B cell (primary cell): ENCODE measurements at regions of chr22 and their contacts with region 1.

Region 1: DNA sequence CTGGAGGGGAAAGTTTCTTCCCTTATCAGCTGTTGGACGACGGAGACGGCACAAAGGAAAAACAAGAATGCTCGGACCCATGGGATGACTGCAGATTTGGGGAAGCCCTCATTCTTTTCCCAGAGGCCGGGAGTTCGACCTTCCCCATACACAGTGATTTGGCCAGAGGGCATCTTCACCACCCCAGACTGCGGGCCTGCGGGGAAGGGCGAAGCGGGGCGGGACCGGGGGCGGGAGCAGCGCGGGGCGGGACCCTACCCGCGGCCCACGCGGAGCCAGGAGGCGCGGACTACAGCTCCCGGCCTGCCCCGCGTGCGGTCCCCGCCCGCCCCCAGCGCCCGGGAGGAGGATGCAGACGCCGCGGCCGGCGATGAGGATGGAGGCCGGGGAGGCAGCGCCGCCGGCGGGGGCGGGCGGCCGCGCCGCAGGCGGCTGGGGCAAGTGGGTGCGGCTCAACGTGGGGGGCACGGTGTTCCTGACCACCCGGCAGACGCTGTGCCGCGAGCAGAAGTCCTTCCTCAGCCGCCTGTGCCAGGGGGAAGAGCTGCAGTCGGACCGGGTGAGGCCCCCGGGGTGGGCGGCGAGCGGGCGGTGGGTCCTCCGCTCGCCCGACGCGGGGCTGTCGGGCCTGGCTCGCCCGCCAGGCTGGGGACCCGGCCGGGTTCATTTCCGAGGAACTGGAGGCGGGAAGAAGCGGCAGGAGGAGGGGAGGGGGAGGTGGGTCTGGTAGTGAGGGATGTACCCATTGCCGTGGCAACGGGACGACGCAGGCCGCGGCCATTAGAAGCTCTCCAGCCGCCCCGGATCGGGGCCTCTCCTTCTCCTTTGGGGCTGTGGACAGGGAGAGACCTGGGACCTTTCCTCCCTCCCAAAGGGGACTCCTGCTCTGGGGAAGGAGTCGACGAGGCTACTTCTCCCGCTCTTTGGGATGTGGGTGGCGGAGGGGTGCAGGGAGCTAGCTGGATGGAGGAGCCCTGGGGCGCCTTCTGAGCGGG is at the start of gene KCTD17:
- DNase-seq: peak; percentile 78
- ATAC-seq: peak; percentile 100
- H3K4me3 ChIP-seq: peak within 1 kb of the TSS in 4 of 5 experiments; percentile 40 to 71 (median 60)
- H3K4me3 Mint-ChIP-seq: peak within 1 kb of the TSS; percentile 85
- H3K27ac ChIP-seq: peak within 1 kb of the TSS in 1 of 2 donors; percentile 36
- H3K27ac Mint-ChIP-seq: peak within 1 kb of the TSS; percentile 39
- H3K4me1 ChIP-seq: peaks cover 7 to 18% of the 10 kb centered on the region in 2 donors
- H3K4me1 Mint-ChIP-seq: peaks cover 12% of the 10 kb centered on the region
- H3K27me3 ChIP-seq: no peaks in the 10 kb centered on the region
- H3K27me3 Mint-ChIP-seq: no peaks in the 10 kb centered on the region
- CTCF ChIP-seq: no peak
- total RNA-seq, gene KCTD17: 40.0 and 41.3 TPM in 2 replicates

Region 2: GRCh38 chr22:35299673-35300497 is 1751.8 kb before region 1 on chr22 and contains the start of gene TOM1:
- CTCF ChIA-PET with region 1: no interaction called
- POLR2A ChIA-PET with region 1: no interaction called
- intact Hi-C with region 1: loop called (anchors 5 kb)
- DNase-seq: peak; percentile 100
- ATAC-seq: peak; percentile 90
- H3K4me3 ChIP-seq: peak within 1 kb of the TSS; percentile 61 to 94 (median 73)
- H3K4me3 Mint-ChIP-seq: peak within 1 kb of the TSS; percentile 93
- H3K27ac ChIP-seq: peak within 1 kb of the TSS; percentile 96 to 97
- H3K27ac Mint-ChIP-seq: peak within 1 kb of the TSS; percentile 98
- H3K4me1 ChIP-seq: peaks cover 5 to 22% of the 10 kb centered on the region in 2 donors
- H3K4me1 Mint-ChIP-seq: peaks cover 26% of the 10 kb centered on the region
- H3K27me3 ChIP-seq: no peaks in the 10 kb centered on the region
- H3K27me3 Mint-ChIP-seq: no peaks in the 10 kb centered on the region
- CTCF ChIP-seq: no peak
- total RNA-seq, gene TOM1: 53.2 and 54.2 TPM in 2 replicates

Region 3: GRCh38 chr22:36985211-36986094 is 66.2 kb before region 1 on chr22:
- CTCF ChIA-PET with region 1: no interaction called
- POLR2A ChIA-PET with region 1: no interaction called
- intact Hi-C with region 1: no loop called
- DNase-seq: no peak
- ATAC-seq: no peak
- H3K4me3 ChIP-seq: no peak overlapping the region
- H3K4me3 Mint-ChIP-seq: no peak overlapping the region
- H3K27ac ChIP-seq: no peak overlapping the region
- H3K27ac Mint-ChIP-seq: no peak overlapping the region
- H3K4me1 ChIP-seq: no peaks in the 10 kb centered on the region
- H3K4me1 Mint-ChIP-seq: no peaks in the 10 kb centered on the region
- H3K27me3 ChIP-seq: peaks cover 0 to 43% (median 9%) of the 10 kb centered on the region in 4 experiments
- H3K27me3 Mint-ChIP-seq: peaks cover 47% of the 10 kb centered on the region
- CTCF ChIP-seq: no peak

Region 4: DNA sequence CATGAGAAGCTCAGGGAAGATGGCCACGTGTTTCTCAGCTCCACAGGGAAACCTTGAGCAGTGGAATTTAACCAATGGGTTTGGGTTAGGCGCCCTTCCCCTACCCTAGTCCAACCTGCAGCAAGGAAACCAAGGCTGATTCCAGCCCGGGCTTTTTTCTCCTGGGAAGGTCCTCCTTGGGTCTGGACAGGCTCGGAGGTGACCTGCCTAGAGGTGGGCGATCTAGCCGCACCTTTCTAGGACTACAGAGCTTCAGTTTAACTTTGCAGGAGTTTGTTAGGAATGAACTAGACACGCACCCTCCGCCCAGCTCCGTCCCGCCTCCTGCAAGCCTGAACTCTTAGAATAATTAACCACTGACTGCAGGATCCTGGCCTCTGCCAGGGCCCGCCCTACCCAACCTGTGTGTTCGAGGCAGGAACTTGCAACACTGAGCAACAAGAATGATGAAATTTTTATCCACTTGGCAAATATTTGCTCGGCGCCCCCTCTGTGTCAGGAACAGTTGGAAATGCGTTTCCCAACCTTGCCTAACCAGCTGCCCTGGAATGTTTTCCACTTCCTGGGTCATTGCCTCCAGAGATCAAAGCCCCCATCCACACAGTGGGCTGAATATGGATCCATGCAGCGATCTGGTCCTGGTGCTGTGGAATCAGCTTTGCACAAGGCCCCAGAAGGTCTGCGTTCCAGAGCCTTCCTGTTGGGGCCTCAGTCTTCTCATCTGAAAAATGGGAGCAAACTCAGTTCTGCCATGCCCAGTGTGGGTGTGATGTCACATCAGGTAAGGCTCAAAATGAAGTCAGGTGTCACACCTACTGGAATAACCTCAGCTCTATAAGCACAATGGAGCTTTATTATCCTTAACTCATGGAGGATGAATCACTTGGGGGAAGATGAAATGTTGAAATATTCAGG is 18.9 kb before region 1 on chr22:
- CTCF ChIA-PET with region 1: no interaction called
- POLR2A ChIA-PET with region 1: interaction called, 10 read pairs
- intact Hi-C with region 1: no loop called
- DNase-seq: no peak
- ATAC-seq: no peak
- H3K4me3 ChIP-seq: no peak overlapping the region
- H3K4me3 Mint-ChIP-seq: no peak overlapping the region
- H3K27ac ChIP-seq: no peak overlapping the region
- H3K27ac Mint-ChIP-seq: no peak overlapping the region
- H3K4me1 ChIP-seq: no peaks in the 10 kb centered on the region
- H3K4me1 Mint-ChIP-seq: no peaks in the 10 kb centered on the region
- H3K27me3 ChIP-seq: peaks cover 0 to 10% (median 0%) of the 10 kb centered on the region in 4 experiments
- H3K27me3 Mint-ChIP-seq: peaks cover 19% of the 10 kb centered on the region
- CTCF ChIP-seq: no peak

Region 5: GRCh38 chr22:37088108-37088605 is 36.5 kb after region 1 on chr22:
- CTCF ChIA-PET with region 1: no interaction called
- POLR2A ChIA-PET with region 1: no interaction called
- intact Hi-C with region 1: no loop called
- DNase-seq: no peak
- ATAC-seq: no peak
- H3K4me3 ChIP-seq: no peak overlapping the region
- H3K4me3 Mint-ChIP-seq: no peak overlapping the region
- H3K27ac ChIP-seq: no peak overlapping the region
- H3K27ac Mint-ChIP-seq: no peak overlapping the region
- H3K4me1 ChIP-seq: no peaks in the 10 kb centered on the region
- H3K4me1 Mint-ChIP-seq: no peaks in the 10 kb centered on the region
- H3K27me3 ChIP-seq: peaks cover 0 to 10% (median 0%) of the 10 kb centered on the region in 4 experiments
- H3K27me3 Mint-ChIP-seq: peaks cover 12% of the 10 kb centered on the region
- CTCF ChIP-seq: no peak

Region 6: GRCh38 chr22:37148742-37149665 is 97.3 kb after region 1 on chr22:
- CTCF ChIA-PET with region 1: no interaction called
- POLR2A ChIA-PET with region 1: no interaction called
- intact Hi-C with region 1: no loop called
- DNase-seq: no peak
- ATAC-seq: no peak
- H3K4me3 ChIP-seq: peak overlapping the region in 2 of 5 experiments; percentile 3 to 5
- H3K4me3 Mint-ChIP-seq: no peak overlapping the region
- H3K27ac ChIP-seq: no peak overlapping the region
- H3K27ac Mint-ChIP-seq: no peak overlapping the region
- H3K4me1 ChIP-seq: peaks cover 0 to 20% of the 10 kb centered on the region in 2 donors
- H3K4me1 Mint-ChIP-seq: peaks cover 22% of the 10 kb centered on the region
- H3K27me3 ChIP-seq: no peaks in the 10 kb centered on the region
- H3K27me3 Mint-ChIP-seq: no peaks in the 10 kb centered on the region
- CTCF ChIP-seq: no peak

Region 7: GRCh38 chr22:37192741-37193140 is 141.1 kb after region 1 on chr22:
- CTCF ChIA-PET with region 1: no interaction called
- POLR2A ChIA-PET with region 1: no interaction called
- intact Hi-C with region 1: no loop called
- DNase-seq: no peak
- ATAC-seq: no peak
- H3K4me3 ChIP-seq: no peak overlapping the region
- H3K4me3 Mint-ChIP-seq: no peak overlapping the region
- H3K27ac ChIP-seq: no peak overlapping the region
- H3K27ac Mint-ChIP-seq: no peak overlapping the region
- H3K4me1 ChIP-seq: peaks cover under 1% of the 10 kb centered on the region in 2 donors
- H3K4me1 Mint-ChIP-seq: peaks cover 8% of the 10 kb centered on the region
- H3K27me3 ChIP-seq: no peaks in the 10 kb centered on the region
- H3K27me3 Mint-ChIP-seq: no peaks in the 10 kb centered on the region
- CTCF ChIP-seq: no peak